Activated CD8-positive, alpha-beta T cell treated with anti-CD3 and anti-CD28 coated beads for 36 hours (primary cell): ENCODE measurements at regions of chr5 and their contacts with region 1.

Region 1: GRCh38 chr5:124583469-124584350 is 162.7 kb downstream of the ZNF608 start:
- DNase-seq: peak; percentile 53
- ATAC-seq: peak; percentile 92
- H3K4me3 Mint-ChIP-seq: no peak overlapping the region
- H3K27ac Mint-ChIP-seq: no peak overlapping the region
- H3K4me1 Mint-ChIP-seq: peaks cover 18% of the 10 kb centered on the region
- H3K27me3 Mint-ChIP-seq: peaks cover 4% of the 10 kb centered on the region
- CTCF ChIP-seq: no peak

Region 2: DNA sequence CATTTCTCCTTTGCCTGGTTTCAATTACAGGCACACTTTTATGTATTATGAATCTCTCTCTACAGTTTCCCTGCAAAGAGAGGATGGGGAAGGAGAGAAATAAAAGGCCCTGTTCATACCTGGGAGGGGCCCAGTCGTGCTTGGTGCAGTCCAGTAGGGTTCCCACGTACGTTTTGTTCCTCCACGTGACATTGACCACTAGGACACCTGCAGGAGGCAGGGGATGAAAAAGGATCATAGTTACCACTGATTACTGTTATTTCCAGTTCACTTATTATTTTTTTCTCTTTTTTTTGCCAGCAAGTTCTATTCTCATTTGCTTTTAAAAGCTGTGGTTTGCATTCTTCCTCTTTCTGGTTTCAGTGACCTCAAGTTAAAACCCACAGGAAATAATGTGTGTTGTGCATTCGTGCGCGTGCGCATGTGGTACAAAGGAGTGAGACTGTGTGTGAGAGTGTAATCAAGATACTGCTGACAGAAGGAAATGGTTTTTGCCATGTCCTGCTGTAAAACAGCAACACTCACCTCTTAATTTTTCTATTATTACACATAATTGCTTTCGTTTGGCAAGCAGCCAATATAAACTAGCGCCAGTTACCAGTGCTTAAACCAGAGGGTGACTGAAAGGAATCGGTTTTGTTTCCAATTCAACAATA is 65.9 kb after region 1 on chr5:
- CTCF ChIA-PET with region 1: no interaction called
- POLR2A ChIA-PET with region 1: no interaction called
- intact Hi-C with region 1: loop called (anchors 5 kb)
- DNase-seq: peak; percentile 83
- ATAC-seq: peak; percentile 93
- H3K4me3 Mint-ChIP-seq: peak overlapping the region; percentile 47
- H3K27ac Mint-ChIP-seq: peak overlapping the region; percentile 78
- H3K4me1 Mint-ChIP-seq: peaks cover 27% of the 10 kb centered on the region
- H3K27me3 Mint-ChIP-seq: peaks cover 32% of the 10 kb centered on the region
- CTCF ChIP-seq: no peak